GM13977 (cell line): ENCODE measurements at regions of chr3 and their contacts with region 1.

Region 1: GRCh38 chr3:71725279-71725991 is at the start of gene EIF4E3:
- DNase-seq: peak; percentile 88
- CTCF ChIP-seq: no peak

Region 2: GRCh38 chr3:72821161-72821781 is 1095.8 kb after region 1 on chr3:
- in situ Hi-C with region 1: loop called (anchors 10 kb)
- DNase-seq: peak; percentile 26
- CTCF ChIP-seq: no peak